GM12878 (cell line): ENCODE measurements at regions of chr1 and their contacts with region 1.

Region 1: GRCh38 chr1:75908717-75909152 is 23.5 kb downstream of the ASB17 start:
- DNase-seq: peak; percentile 7
- ATAC-seq: peak; percentile 99
- H3K4me3 ChIP-seq: no peak overlapping the region
- H3K27ac ChIP-seq: no peak overlapping the region
- H3K4me1 ChIP-seq: no peaks in the 10 kb centered on the region
- H3K27me3 ChIP-seq: no peaks in the 10 kb centered on the region
- CTCF ChIP-seq: peak; percentile 45 to 69 (median 53); a peak in 4 of 6 replicates
- EP300 ChIP-seq: no peak
- POLR2A ChIP-seq: no peak
- RAD21 ChIP-seq: peak; percentile 94

Region 2: GRCh38 chr1:75811211-75811981 is 97.3 kb before region 1 on chr1:
- CTCF ChIA-PET with region 1: no interaction called
- POLR2A ChIA-PET with region 1: no interaction called
- RAD21 ChIA-PET with region 1: no interaction called
- SMC1A ChIA-PET with region 1: no interaction called
- in situ Hi-C with region 1: no loop called
- intact Hi-C with region 1: no loop called
- DNase-seq: no peak
- ATAC-seq: no peak
- H3K4me3 ChIP-seq: no peak overlapping the region
- H3K27ac ChIP-seq: no peak overlapping the region
- H3K4me1 ChIP-seq: no peaks in the 10 kb centered on the region
- H3K27me3 ChIP-seq: no peaks in the 10 kb centered on the region
- CTCF ChIP-seq: no peak
- EP300 ChIP-seq: no peak
- POLR2A ChIP-seq: no peak
- RAD21 ChIP-seq: no peak

Region 3: GRCh38 chr1:75985827-75986226 is 77.1 kb after region 1 on chr1:
- CTCF ChIA-PET with region 1: interaction called, 14 read pairs
- POLR2A ChIA-PET with region 1: no interaction called
- RAD21 ChIA-PET with region 1: interaction called, 11 read pairs
- SMC1A ChIA-PET with region 1: interaction called, 15 read pairs
- in situ Hi-C with region 1: no loop called
- intact Hi-C with region 1: loop called (anchors 2 kb)
- DNase-seq: peak; percentile 75
- ATAC-seq: peak; percentile 93
- H3K4me3 ChIP-seq: no peak overlapping the region
- H3K27ac ChIP-seq: no peak overlapping the region
- H3K4me1 ChIP-seq: peaks cover 9% of the 10 kb centered on the region
- H3K27me3 ChIP-seq: no peaks in the 10 kb centered on the region
- CTCF ChIP-seq: no peak
- EP300 ChIP-seq: peak in 1 of 2 experiments; percentile 50; a peak in 1 of 4 replicates
- POLR2A ChIP-seq: no peak
- RAD21 ChIP-seq: no peak

Region 4: DNA sequence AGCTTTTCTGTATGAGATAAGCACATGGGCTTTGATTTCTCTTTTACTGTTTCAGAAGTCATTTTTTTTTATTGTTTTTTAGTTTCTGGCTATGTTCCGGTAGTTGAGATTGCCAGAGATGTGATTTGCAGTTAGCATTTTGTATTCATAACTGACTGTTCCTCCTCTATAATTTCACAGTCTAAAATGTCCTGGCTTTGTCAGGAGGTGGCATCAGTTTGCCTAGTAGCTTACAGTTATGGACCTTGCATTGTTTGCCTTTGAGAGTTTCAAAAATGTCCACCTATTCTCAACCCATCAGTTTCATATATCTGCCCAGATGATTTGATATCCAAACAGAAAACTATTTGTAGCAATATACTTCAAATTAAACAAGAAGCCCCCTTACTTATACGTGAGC is 126.3 kb after region 1 on chr1:
- CTCF ChIA-PET with region 1: interaction called, 3 read pairs
- POLR2A ChIA-PET with region 1: no interaction called
- RAD21 ChIA-PET with region 1: no interaction called
- SMC1A ChIA-PET with region 1: interaction called, 5 read pairs
- in situ Hi-C with region 1: no loop called
- intact Hi-C with region 1: loop called (anchors 5 kb)
- DNase-seq: no peak
- ATAC-seq: peak; percentile 76
- H3K4me3 ChIP-seq: no peak overlapping the region
- H3K27ac ChIP-seq: no peak overlapping the region
- H3K4me1 ChIP-seq: no peaks in the 10 kb centered on the region
- H3K27me3 ChIP-seq: no peaks in the 10 kb centered on the region
- CTCF ChIP-seq: peak in 2 of 3 experiments; percentile 14 to 22; a peak in 2 of 6 replicates
- EP300 ChIP-seq: no peak
- POLR2A ChIP-seq: no peak
- RAD21 ChIP-seq: peak; percentile 37; the same call in 1 of the 2 replicates

Region 5: DNA sequence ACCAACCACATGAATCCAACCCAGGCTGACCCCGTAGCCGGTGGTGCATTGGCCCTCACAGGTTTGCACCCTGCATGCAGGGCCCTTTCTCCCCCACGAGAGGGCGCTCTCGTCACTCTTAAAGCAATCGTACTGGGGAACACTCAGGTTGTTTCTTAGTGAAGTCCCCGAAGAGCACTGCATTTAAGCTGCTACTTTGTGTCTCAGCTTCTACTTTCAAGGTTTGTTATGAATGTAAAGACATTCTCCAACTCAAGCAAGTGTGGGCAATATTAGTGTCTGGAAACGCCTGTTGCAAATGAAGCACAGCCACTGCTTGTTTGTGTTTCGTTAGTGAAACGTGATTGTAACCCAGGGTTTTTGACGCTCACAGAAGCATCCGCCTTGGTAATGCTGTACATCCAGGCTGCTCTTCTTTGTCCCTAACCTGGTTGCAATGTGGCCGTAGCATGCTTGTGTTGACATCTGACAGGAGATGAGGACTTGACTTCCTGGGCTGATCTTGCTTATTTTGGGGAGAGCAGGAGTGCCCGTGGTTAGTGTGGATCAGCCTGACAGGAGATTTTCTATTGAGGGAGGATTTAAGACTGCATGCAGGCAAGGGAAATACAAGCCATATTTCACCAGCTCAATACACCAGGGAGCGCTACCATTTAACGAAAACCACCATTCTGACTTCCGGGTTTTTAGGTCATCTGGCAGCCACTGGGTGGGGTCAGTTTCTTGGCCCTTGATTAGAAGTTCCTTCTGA is 245.6 kb after region 1 on chr1:
- CTCF ChIA-PET with region 1: interaction called, 28 read pairs
- POLR2A ChIA-PET with region 1: no interaction called
- RAD21 ChIA-PET with region 1: interaction called, 25 read pairs
- SMC1A ChIA-PET with region 1: interaction called, 26 read pairs
- in situ Hi-C with region 1: no loop called
- intact Hi-C with region 1: loop called (anchors 1 kb)
- DNase-seq: peak; percentile 32
- ATAC-seq: peak; percentile 98
- H3K4me3 ChIP-seq: peak overlapping the region; percentile 48; the same call in 1 of the 2 replicates
- H3K27ac ChIP-seq: no peak overlapping the region
- H3K4me1 ChIP-seq: no peaks in the 10 kb centered on the region
- H3K27me3 ChIP-seq: no peaks in the 10 kb centered on the region; a peak in 1 of 4 replicates
- CTCF ChIP-seq: peak; percentile 97 to 99 (median 97)
- EP300 ChIP-seq: no peak
- POLR2A ChIP-seq: no peak
- RAD21 ChIP-seq: peak; percentile 89

Region 6: DNA sequence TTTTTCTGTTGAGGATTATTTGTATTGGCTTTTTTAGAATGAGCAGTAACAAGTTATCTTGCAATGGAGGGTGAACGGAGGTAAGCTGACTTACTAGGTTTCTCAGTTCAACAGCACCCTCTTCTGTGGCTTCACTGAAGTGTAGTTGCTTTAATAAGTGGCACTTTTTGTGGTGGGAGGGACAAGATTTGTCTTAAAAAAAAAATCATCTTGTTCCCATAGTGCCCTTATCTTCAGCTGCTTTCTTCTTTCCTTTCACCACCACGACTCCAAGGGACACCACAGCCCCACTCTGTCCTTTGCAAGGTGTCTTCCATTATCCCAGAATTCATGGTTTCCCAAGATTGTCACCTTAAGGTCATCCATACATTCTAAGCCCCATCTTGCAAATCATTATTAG is 1217.6 kb after region 1 on chr1:
- CTCF ChIA-PET with region 1: no interaction called
- POLR2A ChIA-PET with region 1: no interaction called
- RAD21 ChIA-PET with region 1: interaction called, 4 read pairs
- SMC1A ChIA-PET with region 1: interaction called, 3 read pairs
- in situ Hi-C with region 1: loop called (anchors 25 kb)
- intact Hi-C with region 1: loop called (anchors 10 kb)
- DNase-seq: no peak
- ATAC-seq: peak; percentile 91
- H3K4me3 ChIP-seq: no peak overlapping the region
- H3K27ac ChIP-seq: no peak overlapping the region
- H3K4me1 ChIP-seq: no peaks in the 10 kb centered on the region
- H3K27me3 ChIP-seq: no peaks in the 10 kb centered on the region
- CTCF ChIP-seq: peak; percentile 46 to 76 (median 49); a peak in 5 of 6 replicates
- EP300 ChIP-seq: no peak
- POLR2A ChIP-seq: no peak
- RAD21 ChIP-seq: peak; percentile 81